ENCODE measurements at regions of chr13 and their contacts with region 1.

Region 1: DNA sequence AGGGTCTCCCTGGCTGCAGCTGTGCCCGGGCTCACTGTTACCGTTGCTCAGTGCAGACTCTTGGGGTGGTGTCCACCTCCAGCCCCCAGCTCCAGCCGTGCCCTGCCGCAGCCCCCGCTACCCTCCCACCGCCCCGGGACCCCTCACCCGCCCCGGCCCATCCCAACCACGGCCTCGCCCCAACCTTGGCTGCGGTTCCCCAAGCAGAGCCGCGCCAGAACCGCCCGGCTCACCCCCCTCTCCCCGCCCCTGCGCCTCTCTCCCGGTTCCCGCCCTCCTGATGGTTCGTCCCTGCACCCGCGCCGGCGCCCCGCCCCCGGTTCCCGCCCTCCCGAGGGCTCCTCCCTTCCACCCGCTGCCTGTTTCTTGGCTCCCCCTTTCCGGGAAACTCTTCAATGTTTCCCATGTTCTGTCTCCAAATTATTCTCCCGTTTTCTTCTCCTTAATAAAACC is 40.3 kb downstream of the ANKRD10 start:
- DNase-seq: peak; percentile 95

Region 2: GRCh38 chr13:109809216-109809932 is 1065.2 kb before region 1 on chr13:
- intact Hi-C with region 1: no loop called
- DNase-seq: no peak

Region 3: DNA sequence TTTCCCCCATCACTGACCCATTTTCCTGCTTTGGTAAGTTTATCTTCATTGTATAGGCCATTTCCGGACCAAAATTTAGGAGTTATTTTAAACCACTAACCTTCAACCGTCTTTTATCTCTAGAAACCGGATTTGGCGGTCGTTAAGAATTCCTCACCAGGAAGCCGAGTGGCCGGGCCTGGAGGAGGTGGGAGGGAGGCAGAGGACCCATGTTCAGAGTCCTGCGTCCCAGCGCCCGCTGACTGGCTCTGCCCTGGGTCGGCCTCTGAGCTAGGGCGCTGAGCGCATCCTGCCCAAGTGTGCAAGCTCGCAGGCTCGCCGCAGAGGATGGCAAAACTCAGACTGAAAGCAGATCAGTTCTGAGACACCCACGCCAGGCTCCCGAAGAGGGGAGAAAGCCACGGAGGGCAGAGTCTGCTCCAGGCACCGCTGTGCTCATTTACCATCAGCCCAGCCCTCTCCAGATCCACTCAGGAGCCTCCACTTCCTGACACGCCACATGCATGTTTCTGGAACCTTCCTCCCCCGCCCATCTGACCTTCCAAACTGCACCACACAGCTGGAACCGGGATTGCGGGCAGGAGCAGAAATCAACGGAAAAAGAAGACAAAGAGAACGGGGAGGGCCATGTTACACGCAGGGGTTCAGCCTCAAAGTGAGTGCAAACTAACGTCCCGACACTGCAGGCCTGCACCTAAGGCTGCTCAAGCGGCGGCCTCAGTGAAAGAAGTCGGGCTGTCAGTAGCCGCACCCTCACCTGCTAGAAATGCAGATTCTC is 575.8 kb before region 1 on chr13:
- intact Hi-C with region 1: no loop called
- DNase-seq: no peak

Region 4: DNA sequence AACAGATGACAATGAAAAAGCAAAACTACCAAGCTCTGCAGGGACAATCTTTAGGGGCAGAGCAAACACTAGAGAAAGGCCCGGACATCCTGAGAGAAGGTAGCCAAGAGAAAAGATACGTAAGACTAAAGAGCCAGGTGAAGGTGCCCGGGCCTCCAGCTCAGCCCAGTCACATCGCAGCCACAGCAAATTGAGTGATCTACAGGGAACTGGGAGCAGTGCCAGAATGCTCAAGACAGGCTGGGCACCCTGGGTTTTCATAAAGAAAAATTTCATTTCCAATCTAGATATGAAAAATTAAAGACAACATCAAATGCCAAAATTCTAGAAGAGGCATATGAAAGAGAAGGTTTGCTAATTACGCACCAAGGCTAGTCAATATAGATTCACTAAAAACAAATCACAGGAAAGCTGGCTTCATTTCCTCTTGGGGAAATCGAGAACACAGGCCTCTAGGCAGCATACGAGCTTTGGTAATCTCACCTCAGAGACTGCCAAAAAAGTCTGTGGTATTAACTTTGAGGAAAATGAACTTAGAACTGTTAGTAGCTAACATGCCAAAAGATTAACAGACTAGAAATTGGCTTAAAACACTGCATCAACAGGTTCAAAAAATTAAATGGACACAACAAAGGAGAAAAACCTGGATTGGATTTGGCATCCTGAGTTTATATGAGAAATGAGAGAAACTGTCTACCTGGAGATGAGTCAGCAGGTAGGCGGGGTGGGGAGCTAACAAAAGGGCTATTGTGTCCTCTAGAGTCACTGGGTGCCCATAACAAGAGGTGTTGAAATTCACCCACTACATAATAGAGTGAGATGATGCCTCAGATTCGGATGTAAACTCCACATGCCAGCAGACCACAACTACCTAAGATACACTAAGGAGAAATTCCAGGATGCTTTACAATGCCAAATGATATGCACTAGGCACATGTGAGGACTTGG is 33.7 kb after region 1 on chr13:
- intact Hi-C with region 1: loop called in 1 of 2 experiments (anchors 5 kb)
- DNase-seq: no peak

Region 5: GRCh38 chr13:111423168-111423785 is 548.7 kb after region 1 on chr13:
- intact Hi-C with region 1: no loop called
- DNase-seq: no peak

Measured in posterior vena cava (tissue), 2 donors.